ENCODE measurements at regions of chr1 and their contacts with region 1.

Region 1: DNA sequence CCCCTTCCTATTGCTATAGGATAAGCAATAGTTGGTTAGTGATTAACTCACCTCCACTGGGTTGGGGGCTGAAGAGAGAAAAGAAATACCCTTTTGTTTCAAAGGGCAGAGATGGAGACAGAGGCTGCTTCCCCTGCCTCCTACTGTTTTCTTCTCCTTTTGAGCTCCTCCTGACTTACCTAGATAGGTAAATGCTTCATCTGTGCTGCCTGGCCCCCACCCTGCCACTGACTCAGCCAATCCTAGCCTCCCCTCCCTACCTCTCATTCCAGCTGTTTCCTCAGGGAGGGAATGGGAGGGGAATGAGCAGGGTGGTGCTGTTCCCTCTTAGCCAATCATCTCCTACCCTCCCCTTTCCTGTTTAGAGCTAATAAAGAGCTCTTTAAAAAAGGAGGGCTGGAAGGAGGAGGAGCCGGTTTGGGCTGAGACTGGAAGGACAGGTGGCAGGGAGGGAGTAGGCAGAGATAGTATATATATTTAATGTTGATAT is at the start of gene C1orf116:
- DNase-seq: peak; percentile 88 to 90
- H3K4me3 ChIP-seq: peak within 1 kb of the TSS; percentile 50
- H3K27ac ChIP-seq: peak within 1 kb of the TSS; percentile 83
- H3K4me1 ChIP-seq: peaks cover 80% of the 10 kb centered on the region
- H3K27me3 ChIP-seq: no peaks in the 10 kb centered on the region
- CTCF ChIP-seq: no peak
- total RNA-seq, gene C1orf116: 30.2 and 36.7 TPM in 2 replicates

Region 2: GRCh38 chr1:206865013-206865671 is 167.4 kb before region 1 on chr1 and contains the start of gene IL20:
- CTCF ChIA-PET with region 1: no interaction called
- POLR2A ChIA-PET with region 1: no interaction called
- intact Hi-C with region 1: no loop called
- DNase-seq: peak; percentile 48 to 61
- H3K4me3 ChIP-seq: no peak within 1 kb of the TSS
- H3K27ac ChIP-seq: no peak within 1 kb of the TSS
- H3K4me1 ChIP-seq: no peaks in the 10 kb centered on the region
- H3K27me3 ChIP-seq: peaks cover 28% of the 10 kb centered on the region
- CTCF ChIP-seq: peak; percentile 85
- total RNA-seq, gene IL20: not detected in 2 replicates

Region 3: GRCh38 chr1:206925106-206925736 is 107.4 kb before region 1 on chr1:
- CTCF ChIA-PET with region 1: no interaction called
- POLR2A ChIA-PET with region 1: no interaction called
- intact Hi-C with region 1: no loop called
- DNase-seq: no peak
- H3K4me3 ChIP-seq: no peak overlapping the region
- H3K27ac ChIP-seq: no peak overlapping the region
- H3K4me1 ChIP-seq: peaks cover 19% of the 10 kb centered on the region
- H3K27me3 ChIP-seq: no peaks in the 10 kb centered on the region
- CTCF ChIP-seq: no peak

Region 4: DNA sequence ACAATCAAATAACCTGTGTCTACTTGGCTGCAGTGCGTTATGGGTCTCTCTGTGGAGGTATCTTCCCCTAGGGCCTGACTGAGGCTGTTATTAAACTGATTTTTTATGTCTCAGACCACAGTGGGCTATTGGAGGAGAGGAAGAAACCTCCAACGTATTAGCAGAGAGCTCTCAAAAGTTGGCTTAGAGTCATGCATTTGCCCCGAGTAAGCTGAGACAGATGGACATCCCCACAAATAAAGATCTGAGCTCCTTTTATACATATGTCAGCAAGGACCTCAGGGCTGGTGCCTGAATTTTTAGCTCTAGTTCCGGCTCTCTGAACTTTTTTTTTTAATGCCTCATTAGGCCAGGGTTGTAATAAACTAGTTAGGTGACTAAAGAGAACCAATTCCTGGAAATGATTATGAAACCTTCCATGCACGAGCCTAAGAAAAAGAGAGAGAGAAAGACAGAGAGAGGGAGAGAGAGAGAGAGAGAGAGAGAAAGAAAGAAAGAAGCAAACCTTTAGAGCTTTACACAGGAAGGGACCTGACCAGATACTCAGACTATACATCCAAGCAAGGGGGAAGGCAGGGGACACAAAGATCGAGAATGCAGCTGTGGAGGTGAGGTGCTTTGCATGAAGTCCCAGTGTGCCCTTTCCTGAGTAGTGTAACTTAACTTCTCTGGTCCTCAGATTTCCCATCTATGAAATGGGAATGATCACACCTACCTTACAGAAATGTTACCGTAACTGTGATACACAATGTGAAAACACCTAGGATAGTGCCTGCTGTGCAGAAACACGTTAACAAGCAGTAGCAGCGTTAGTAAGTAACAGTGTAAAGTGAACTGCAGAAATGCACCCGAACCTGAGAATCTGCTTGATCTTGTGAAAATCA is 77.9 kb before region 1 on chr1:
- CTCF ChIA-PET with region 1: no interaction called
- POLR2A ChIA-PET with region 1: interaction called, 18 read pairs
- intact Hi-C with region 1: no loop called
- DNase-seq: peak in 1 of 2 experiments; percentile 72
- H3K4me3 ChIP-seq: no peak overlapping the region
- H3K27ac ChIP-seq: peak overlapping the region; percentile 64
- H3K4me1 ChIP-seq: peaks cover 30% of the 10 kb centered on the region
- H3K27me3 ChIP-seq: no peaks in the 10 kb centered on the region
- CTCF ChIP-seq: peak; percentile 28; the same call in 1 of the 2 replicates

Region 5: GRCh38 chr1:207004981-207005830 is 27.4 kb before region 1 on chr1:
- CTCF ChIA-PET with region 1: interaction called, 5 read pairs
- POLR2A ChIA-PET with region 1: interaction called, 17 read pairs
- intact Hi-C with region 1: loop called (anchors 1 kb)
- DNase-seq: peak; percentile 50 to 59
- H3K4me3 ChIP-seq: no peak overlapping the region
- H3K27ac ChIP-seq: peak overlapping the region; percentile 93
- H3K4me1 ChIP-seq: peaks cover 80% of the 10 kb centered on the region
- H3K27me3 ChIP-seq: no peaks in the 10 kb centered on the region
- CTCF ChIP-seq: peak; percentile 71

Region 6: DNA sequence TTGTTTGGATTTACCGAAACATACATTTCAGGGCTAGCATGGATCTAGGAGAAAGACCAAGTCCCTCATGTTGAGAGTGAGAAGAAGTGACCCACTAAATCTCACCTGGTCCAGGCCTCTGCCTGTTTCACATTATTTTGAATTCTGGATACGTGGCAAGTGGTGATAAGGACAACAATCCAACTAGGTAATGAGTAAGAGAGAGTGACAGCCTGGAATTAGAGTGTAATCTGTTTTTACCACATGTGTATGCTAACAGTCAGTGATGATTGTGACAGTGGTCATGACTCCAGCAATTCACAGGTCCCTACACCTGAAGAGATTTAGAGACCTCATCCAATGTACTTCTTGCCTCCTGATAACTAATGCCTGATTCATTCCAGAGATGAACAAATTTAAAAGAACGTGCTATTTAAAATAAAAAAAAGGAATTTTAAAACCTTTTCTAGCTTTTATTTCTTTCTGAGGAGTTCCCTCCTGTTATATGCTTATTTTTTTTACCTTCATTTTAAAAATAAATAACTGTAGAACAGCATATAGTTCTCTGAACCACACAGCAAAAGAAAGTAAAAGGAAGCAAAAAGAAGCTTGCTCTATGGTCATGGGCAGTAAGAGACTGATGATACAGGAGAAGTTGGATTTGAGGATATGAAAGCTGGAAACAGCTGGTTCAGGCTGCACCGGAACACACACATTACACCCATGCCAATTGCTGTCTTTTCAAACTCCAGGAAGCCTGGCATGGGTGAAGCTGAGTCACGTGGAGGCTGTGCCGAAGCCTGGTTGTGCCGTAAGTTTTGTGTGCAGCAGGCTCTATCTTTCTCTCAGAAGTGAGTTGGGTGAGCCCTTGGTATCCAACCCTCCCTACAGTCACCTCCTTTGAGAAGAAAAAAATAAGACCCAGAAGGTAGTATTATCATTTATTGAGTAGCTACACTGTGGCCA is 14.7 kb before region 1 on chr1:
- CTCF ChIA-PET with region 1: interaction called, 4 read pairs
- POLR2A ChIA-PET with region 1: interaction called, 36 read pairs
- intact Hi-C with region 1: no loop called
- DNase-seq: no peak
- H3K4me3 ChIP-seq: no peak overlapping the region
- H3K27ac ChIP-seq: no peak overlapping the region
- H3K4me1 ChIP-seq: peaks cover 35% of the 10 kb centered on the region
- H3K27me3 ChIP-seq: no peaks in the 10 kb centered on the region
- CTCF ChIP-seq: no peak

Region 7: DNA sequence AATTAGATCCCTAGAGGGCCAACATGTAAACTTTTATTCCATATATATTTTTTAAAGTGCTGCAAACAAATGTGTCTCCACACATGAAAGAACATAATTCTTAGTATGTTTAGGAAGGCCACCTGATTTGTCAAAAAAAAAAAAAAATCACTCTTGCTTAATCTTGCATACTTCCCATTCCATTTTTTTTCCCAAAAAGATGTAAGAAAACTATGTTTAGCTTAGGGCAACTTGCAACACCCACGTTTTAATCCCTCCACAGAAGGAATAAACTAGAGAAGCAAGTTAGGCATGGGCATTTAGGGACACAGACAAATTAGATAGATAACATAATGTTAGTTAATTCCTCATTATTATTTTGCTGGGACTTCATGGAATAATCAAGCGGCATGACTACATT is 12.9 kb after region 1 on chr1:
- CTCF ChIA-PET with region 1: interaction called, 6 read pairs
- POLR2A ChIA-PET with region 1: interaction called, 14 read pairs
- intact Hi-C with region 1: loop called (anchors 1 kb)
- DNase-seq: peak in 1 of 2 experiments; percentile 32
- H3K4me3 ChIP-seq: no peak overlapping the region; the same call in 1 of the 2 replicates
- H3K27ac ChIP-seq: no peak overlapping the region
- H3K4me1 ChIP-seq: peaks cover 48% of the 10 kb centered on the region
- H3K27me3 ChIP-seq: no peaks in the 10 kb centered on the region
- CTCF ChIP-seq: no peak

Region 8: GRCh38 chr1:207181838-207182237 is 149.3 kb after region 1 on chr1:
- CTCF ChIA-PET with region 1: no interaction called
- POLR2A ChIA-PET with region 1: no interaction called
- intact Hi-C with region 1: no loop called
- DNase-seq: no peak
- H3K4me3 ChIP-seq: no peak overlapping the region
- H3K27ac ChIP-seq: no peak overlapping the region
- H3K4me1 ChIP-seq: no peaks in the 10 kb centered on the region
- H3K27me3 ChIP-seq: no peaks in the 10 kb centered on the region
- CTCF ChIP-seq: peak; percentile 45